Activated naive CD4-positive, alpha-beta T cell treated with anti-CD3 and anti-CD28 coated beads for 36 hours (primary cell): ENCODE measurements at regions of chr10 and their contacts with region 1.

Region 1: DNA sequence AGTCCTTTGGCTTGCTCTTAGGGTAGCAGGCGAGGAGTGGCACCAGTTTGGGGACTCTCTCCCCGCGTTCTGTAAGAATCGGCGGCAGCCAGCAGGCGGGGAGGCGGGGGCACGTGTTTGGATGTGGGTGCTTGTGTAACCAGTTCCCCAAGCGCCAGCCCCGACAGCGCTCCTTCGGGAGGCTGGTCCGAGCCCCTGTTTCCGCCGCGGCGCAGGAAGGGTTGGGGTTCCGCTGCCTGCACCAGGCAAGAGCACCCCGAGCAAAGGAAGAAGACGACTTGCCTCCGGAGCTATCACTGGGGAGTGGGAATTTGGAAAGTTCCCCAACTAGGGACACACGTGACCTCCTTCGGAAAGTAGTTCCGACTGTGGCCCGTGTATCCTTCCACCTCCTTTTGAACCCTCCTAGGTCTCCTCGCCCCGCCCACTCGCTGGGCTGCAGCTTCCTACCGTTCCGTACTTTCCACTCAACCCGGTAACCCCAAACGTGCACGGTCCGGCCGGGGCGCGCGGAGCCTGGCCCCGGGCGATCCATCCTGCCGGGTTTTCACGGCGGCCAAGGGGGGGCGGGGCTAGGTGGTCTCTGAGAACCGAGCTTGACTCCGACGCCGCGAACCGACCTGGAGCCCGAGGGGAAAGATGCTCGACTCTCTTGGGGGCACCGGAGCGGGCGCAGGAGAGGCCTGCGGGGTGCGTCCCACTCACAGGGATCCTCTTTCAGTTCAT is 1.2 kb downstream of the KLLN start:
- DNase-seq: peak; percentile 95
- H3K4me3 Mint-ChIP-seq: peak overlapping the region; percentile 96
- H3K27ac Mint-ChIP-seq: peak overlapping the region; percentile 95
- H3K4me1 Mint-ChIP-seq: peaks cover 33% of the 10 kb centered on the region
- H3K27me3 Mint-ChIP-seq: peaks cover 3% of the 10 kb centered on the region

Region 2: GRCh38 chr10:87873656-87874055 is 11.5 kb after region 1 on chr10:
- CTCF ChIA-PET with region 1: no interaction called
- intact Hi-C with region 1: loop called (anchors 1 kb)
- DNase-seq: no peak
- H3K4me3 Mint-ChIP-seq: no peak overlapping the region
- H3K27ac Mint-ChIP-seq: no peak overlapping the region
- H3K4me1 Mint-ChIP-seq: peaks cover 45% of the 10 kb centered on the region
- H3K27me3 Mint-ChIP-seq: no peaks in the 10 kb centered on the region

Region 3: DNA sequence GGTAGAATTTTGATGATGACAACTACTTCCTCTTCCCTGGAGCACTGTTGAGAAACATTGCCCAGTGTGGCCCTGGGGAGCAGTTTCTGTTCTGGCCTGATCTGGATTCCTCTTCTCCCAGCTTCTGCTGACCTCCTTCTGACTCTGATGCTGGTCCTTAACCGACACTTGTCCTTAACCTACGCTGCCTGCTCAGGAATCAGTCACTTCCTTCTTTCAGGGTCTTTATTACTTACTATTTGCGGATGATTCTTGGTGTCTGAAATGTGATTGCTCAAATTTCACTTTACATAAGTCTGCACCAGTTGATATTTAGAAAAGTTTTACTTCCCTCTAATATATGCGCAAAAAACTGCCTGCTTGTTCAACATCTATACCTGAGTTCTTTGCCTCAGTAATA is 165.5 kb after region 1 on chr10:
- CTCF ChIA-PET with region 1: interaction called, 3 read pairs
- intact Hi-C with region 1: loop called (anchors 5 kb)
- DNase-seq: no peak
- H3K4me3 Mint-ChIP-seq: no peak overlapping the region
- H3K27ac Mint-ChIP-seq: no peak overlapping the region
- H3K4me1 Mint-ChIP-seq: peaks cover 17% of the 10 kb centered on the region
- H3K27me3 Mint-ChIP-seq: no peaks in the 10 kb centered on the region

Region 4: GRCh38 chr10:88270871-88271713 is 409.0 kb after region 1 on chr10:
- CTCF ChIA-PET with region 1: no interaction called
- intact Hi-C with region 1: loop called (anchors 1 kb)
- DNase-seq: peak; percentile 43
- H3K4me3 Mint-ChIP-seq: no peak overlapping the region
- H3K27ac Mint-ChIP-seq: peak overlapping the region; percentile 4
- H3K4me1 Mint-ChIP-seq: peaks cover 30% of the 10 kb centered on the region
- H3K27me3 Mint-ChIP-seq: peaks cover 3% of the 10 kb centered on the region

Region 5: DNA sequence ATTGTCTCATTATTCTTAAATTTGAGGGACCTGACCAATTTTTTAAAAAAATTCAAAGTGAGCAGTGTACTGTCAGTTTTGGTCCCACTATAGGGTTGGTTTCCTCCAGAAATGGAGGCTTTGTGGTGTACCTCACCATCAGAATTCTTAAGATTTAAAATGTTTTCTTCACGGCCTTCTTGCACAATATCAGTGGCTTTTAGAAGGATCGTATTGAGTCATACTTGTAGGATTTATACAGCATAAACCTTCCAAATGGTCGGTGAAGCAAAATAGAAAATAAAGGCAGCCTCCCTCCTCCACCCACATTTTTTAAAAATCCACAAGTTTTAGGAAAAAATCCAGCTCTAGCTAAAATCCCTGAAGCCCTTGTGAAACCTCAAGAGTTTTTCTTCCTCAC is 594.6 kb after region 1 on chr10:
- CTCF ChIA-PET with region 1: no interaction called
- intact Hi-C with region 1: loop called (anchors 2 kb)
- DNase-seq: no peak
- H3K4me3 Mint-ChIP-seq: no peak overlapping the region
- H3K27ac Mint-ChIP-seq: no peak overlapping the region
- H3K4me1 Mint-ChIP-seq: peaks cover 2% of the 10 kb centered on the region
- H3K27me3 Mint-ChIP-seq: no peaks in the 10 kb centered on the region

Region 6: GRCh38 chr10:88880282-88881076 is 1018.4 kb after region 1 on chr10:
- CTCF ChIA-PET with region 1: no interaction called
- intact Hi-C with region 1: loop called (anchors 5 kb)
- DNase-seq: peak; percentile 82
- H3K4me3 Mint-ChIP-seq: peak overlapping the region; percentile 95
- H3K27ac Mint-ChIP-seq: peak overlapping the region; percentile 97
- H3K4me1 Mint-ChIP-seq: peaks cover 58% of the 10 kb centered on the region
- H3K27me3 Mint-ChIP-seq: no peaks in the 10 kb centered on the region